ENCODE measurements at regions of chr4 and their contacts with region 1.

Region 1: DNA sequence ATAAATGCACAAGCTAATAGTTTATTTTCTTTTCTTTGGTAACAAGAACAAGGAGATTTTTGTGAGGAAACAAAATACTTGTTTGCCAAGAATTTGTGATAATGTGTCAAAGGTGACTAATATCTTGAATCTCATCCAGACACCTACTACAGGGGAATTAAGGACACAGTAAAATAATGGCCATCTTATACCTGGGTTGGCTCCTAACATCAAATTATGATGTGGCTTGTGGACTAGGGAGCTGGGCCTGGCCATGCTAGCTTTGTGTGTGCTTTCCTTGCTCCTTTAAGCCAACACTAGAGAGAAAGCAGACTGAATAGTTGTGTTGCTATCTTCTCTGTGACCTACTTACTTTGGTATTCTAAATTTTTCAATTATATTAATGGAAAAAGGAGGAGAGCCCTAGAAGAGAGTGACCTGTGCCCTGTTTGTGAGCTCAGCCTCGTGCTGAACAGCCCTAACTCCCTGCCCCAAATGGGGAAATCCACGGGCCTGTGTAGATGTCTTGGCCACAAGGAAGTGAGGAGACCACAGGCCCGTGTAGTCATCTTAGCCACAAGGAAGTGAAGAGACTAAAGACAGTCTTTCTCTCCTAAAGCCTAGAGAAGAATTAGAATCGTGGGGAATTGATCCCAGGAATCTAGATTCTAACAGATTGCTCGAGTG is 23.3 kb downstream of the ARHGAP24 start:
- DNase-seq: no peak
- ATAC-seq: peak; percentile 60 to 88 (median 80)
- H3K4me3 ChIP-seq: no peak overlapping the region
- H3K27ac ChIP-seq: peak overlapping the region in 8 of 10 donors; percentile 34 to 77 (median 60)
- H3K4me1 ChIP-seq: peaks cover 8 to 52% (median 34%) of the 10 kb centered on the region in 9 donors
- H3K27me3 ChIP-seq: no peaks in the 10 kb centered on the region
- CTCF ChIP-seq: no peak

Region 2: GRCh38 chr4:85430697-85431096 is 67.5 kb before region 1 on chr4:
- intact Hi-C with region 1: no loop called
- DNase-seq: no peak
- ATAC-seq: no peak
- H3K4me3 ChIP-seq: no peak overlapping the region
- H3K27ac ChIP-seq: no peak overlapping the region
- H3K4me1 ChIP-seq: peaks cover 0 to 17% (median 7%) of the 10 kb centered on the region in 9 donors
- H3K27me3 ChIP-seq: no peaks in the 10 kb centered on the region
- CTCF ChIP-seq: no peak

Region 3: GRCh38 chr4:85591406-85592098 is 93.4 kb after region 1 on chr4:
- intact Hi-C with region 1: loop called in 1 of 10 experiments (anchors 10 kb)
- DNase-seq: no peak
- ATAC-seq: no peak
- H3K4me3 ChIP-seq: no peak overlapping the region
- H3K27ac ChIP-seq: no peak overlapping the region
- H3K4me1 ChIP-seq: peaks cover 0 to 16% (median 8%) of the 10 kb centered on the region in 9 donors
- H3K27me3 ChIP-seq: no peaks in the 10 kb centered on the region
- CTCF ChIP-seq: no peak

Region 4: GRCh38 chr4:85603437-85604336 is 105.5 kb after region 1 on chr4:
- intact Hi-C with region 1: loop called in 2 of 10 experiments (anchors 10 kb)
- DNase-seq: no peak
- ATAC-seq: peak in 5 of 8 donors; percentile 29 to 85 (median 51)
- H3K4me3 ChIP-seq: no peak overlapping the region
- H3K27ac ChIP-seq: peak overlapping the region in 1 of 10 donors; percentile 5
- H3K4me1 ChIP-seq: peaks cover 0 to 26% (median 11%) of the 10 kb centered on the region in 9 donors
- H3K27me3 ChIP-seq: no peaks in the 10 kb centered on the region
- CTCF ChIP-seq: no peak

Measured in heart right ventricle (tissue), 16 donors.